ENCODE measurements at regions of chr2 and their contacts with region 1.

Region 1: GRCh38 chr2:99697811-99698568 is 208.2 kb upstream of the REV1 start:
- DNase-seq: peak in 4 of 5 donors; percentile 43 to 70 (median 50)
- ATAC-seq: peak; percentile 64 to 94 (median 82)
- H3K4me3 ChIP-seq: no peak overlapping the region
- H3K27ac ChIP-seq: peak overlapping the region in 6 of 12 donors; percentile 11 to 53 (median 40)
- H3K4me1 ChIP-seq: peaks cover 0 to 47% (median 8%) of the 10 kb centered on the region in 12 donors
- H3K27me3 ChIP-seq: no peaks in the 10 kb centered on the region
- CTCF ChIP-seq: no peak
- POLR2A ChIP-seq: no peak

Region 2: GRCh38 chr2:99636144-99637034 is 61.6 kb before region 1 on chr2:
- intact Hi-C with region 1: loop called in 2 of 10 experiments (anchors 5 to 10 kb)
- DNase-seq: peak; percentile 88 to 95 (median 92)
- ATAC-seq: peak; percentile 94 to 97 (median 96)
- H3K4me3 ChIP-seq: no peak overlapping the region
- H3K27ac ChIP-seq: peak overlapping the region; percentile 27 to 84 (median 68)
- H3K4me1 ChIP-seq: peaks cover 0 to 36% (median 20%) of the 10 kb centered on the region in 12 donors
- H3K27me3 ChIP-seq: no peaks in the 10 kb centered on the region
- CTCF ChIP-seq: peak in 1 of 12 donors; percentile 16
- POLR2A ChIP-seq: no peak

Region 3: GRCh38 chr2:99651930-99652670 is 45.9 kb before region 1 on chr2:
- intact Hi-C with region 1: loop called in 1 of 10 experiments (anchors 5 kb)
- DNase-seq: no peak
- ATAC-seq: no peak
- H3K4me3 ChIP-seq: no peak overlapping the region
- H3K27ac ChIP-seq: no peak overlapping the region
- H3K4me1 ChIP-seq: peaks cover 0 to 27% (median 10%) of the 10 kb centered on the region in 12 donors
- H3K27me3 ChIP-seq: no peaks in the 10 kb centered on the region
- CTCF ChIP-seq: no peak
- POLR2A ChIP-seq: no peak

Measured in heart left ventricle (tissue), 16 donors.